ENCODE measurements at regions of chr1 and their contacts with region 1.

Region 1: DNA sequence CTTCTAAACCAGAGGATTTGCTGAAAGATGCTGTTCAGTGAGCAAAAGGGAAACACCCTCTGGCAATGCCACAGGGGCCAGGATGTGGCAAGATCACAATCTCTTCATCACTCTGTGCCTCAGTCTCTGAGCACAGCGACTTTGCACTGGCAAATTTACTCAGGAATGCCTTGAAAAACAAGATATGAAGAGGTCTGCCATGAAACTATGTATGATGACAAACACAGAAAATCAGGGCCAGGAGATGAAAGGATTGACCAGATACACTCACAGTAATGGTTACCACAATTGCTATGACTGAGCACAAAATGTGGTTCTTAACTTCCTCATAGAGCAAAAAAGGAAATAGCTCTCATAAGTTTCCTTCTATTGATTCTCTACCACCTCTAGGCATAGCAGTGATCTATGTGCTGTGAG is 5.8 kb downstream of the TTC13 start:
- DNase-seq: no peak
- ATAC-seq: peak; percentile 39; the same call in 2 of the 3 replicates
- H3K4me3 ChIP-seq: no peak overlapping the region
- H3K27ac ChIP-seq: no peak overlapping the region
- H3K4me1 ChIP-seq: peaks cover under 1 to 9% of the 10 kb centered on the region in 2 experiments; a peak in 3 of 5 replicates
- H3K27me3 ChIP-seq: no peaks in the 10 kb centered on the region
- CTCF ChIP-seq: no peak
- EP300 ChIP-seq: no peak
- POLR2A ChIP-seq: no peak
- RAD21 ChIP-seq: 0 out of 4 replicates have a peak, but pooled peaks of 1 of the 2 experiments have one; percentile 13

Region 2: DNA sequence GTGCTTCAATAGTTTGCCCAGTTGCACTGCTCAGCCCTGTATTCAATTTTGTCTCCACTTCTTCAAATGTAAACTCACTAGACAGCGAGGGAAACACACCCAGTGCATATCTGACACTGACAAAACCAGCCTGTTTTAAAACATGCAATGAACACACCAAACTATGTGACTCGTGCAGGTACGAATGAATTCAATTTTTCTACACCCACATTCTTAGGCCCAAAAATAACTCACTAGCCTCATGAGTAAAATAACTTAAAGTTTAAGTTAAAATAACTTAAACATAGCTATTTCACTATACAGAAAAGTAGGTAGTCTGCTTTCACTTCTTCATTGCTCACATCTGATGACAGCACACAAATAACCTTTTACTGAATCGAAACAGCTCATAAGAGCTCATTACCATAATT is 15.3 kb before region 1 on chr1:
- CTCF ChIA-PET with region 1: no interaction called
- POLR2A ChIA-PET with region 1: interaction called, 15 read pairs
- in situ Hi-C with region 1: no loop called
- intact Hi-C with region 1: no loop called
- DNase-seq: no peak
- ATAC-seq: no peak
- H3K4me3 ChIP-seq: no peak overlapping the region
- H3K27ac ChIP-seq: no peak overlapping the region
- H3K4me1 ChIP-seq: no peaks in the 10 kb centered on the region
- H3K27me3 ChIP-seq: no peaks in the 10 kb centered on the region
- CTCF ChIP-seq: no peak
- EP300 ChIP-seq: no peak
- POLR2A ChIP-seq: no peak
- RAD21 ChIP-seq: no peak

Region 3: DNA sequence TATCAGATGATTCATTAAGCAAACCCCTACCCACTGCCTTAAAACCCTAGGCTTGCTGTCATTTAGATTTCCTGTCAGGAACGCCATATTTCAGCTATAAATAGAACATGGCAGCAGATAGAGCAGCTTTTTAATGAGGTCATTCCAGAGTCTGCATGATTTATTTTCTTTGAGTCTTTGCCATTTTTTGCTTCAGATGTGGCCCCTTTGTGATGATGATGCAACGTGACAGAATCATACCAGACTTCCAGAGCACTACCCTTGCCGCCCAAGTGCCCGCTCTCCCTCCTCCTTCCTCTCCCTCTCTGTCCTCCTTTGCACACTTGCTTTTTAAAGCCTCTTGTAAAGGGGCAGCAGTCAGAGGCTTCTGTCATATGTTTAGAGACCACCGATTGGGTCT is 133.5 kb after region 1 on chr1:
- CTCF ChIA-PET with region 1: no interaction called
- POLR2A ChIA-PET with region 1: no interaction called
- in situ Hi-C with region 1: no loop called
- intact Hi-C with region 1: no loop called
- DNase-seq: no peak
- ATAC-seq: no peak; the same call in 2 of the 3 replicates
- H3K4me3 ChIP-seq: no peak overlapping the region
- H3K27ac ChIP-seq: no peak overlapping the region
- H3K4me1 ChIP-seq: peaks cover 0 to 5% of the 10 kb centered on the region in 2 experiments; a peak in 2 of 5 replicates
- H3K27me3 ChIP-seq: peaks cover 11 to 25% of the 10 kb centered on the region in 2 experiments; a peak in 4 of 5 replicates
- CTCF ChIP-seq: no peak
- EP300 ChIP-seq: no peak
- POLR2A ChIP-seq: no peak
- RAD21 ChIP-seq: no peak